ENCODE measurements at regions of chr10 and their contacts with region 1.

Region 1: DNA sequence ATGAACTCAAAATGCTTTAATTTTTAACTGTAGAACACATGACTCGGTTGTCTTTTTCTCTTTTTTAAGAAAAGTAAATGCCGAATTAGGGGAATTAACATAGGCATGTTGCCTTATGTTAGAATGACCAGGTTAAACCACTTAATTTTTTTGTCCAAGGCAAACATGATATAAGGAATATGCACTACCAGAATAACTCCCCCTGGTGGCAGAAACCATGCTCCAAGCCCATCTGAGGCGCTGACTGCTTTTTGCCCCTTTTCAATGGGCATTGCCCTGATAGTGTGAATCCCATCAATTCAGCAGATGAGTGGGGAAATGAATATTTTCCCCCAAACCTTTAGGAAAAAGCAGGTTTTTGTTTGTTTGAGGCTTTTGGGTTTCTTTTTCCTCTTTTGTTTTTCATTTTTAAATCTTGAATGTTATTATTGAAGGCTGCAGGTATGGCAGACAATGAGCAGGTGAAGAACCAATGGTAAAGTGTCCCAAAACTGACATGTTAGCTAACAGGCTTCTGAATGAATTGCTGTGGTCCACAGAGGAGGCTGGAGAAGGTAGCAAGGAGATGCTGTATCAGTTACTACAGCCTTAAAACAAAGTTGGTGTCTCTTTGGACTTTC is 284.3 kb downstream of the SORCS3 start:
- DNase-seq: peak; percentile 9
- H3K4me3 ChIP-seq: no peak overlapping the region
- H3K27ac ChIP-seq: no peak overlapping the region
- H3K4me1 ChIP-seq: no peaks in the 10 kb centered on the region
- H3K27me3 ChIP-seq: no peaks in the 10 kb centered on the region
- CTCF ChIP-seq: peak in 3 of 4 experiments; percentile 34 to 56 (median 38)
- POLR2A ChIP-seq: no peak

Region 2: DNA sequence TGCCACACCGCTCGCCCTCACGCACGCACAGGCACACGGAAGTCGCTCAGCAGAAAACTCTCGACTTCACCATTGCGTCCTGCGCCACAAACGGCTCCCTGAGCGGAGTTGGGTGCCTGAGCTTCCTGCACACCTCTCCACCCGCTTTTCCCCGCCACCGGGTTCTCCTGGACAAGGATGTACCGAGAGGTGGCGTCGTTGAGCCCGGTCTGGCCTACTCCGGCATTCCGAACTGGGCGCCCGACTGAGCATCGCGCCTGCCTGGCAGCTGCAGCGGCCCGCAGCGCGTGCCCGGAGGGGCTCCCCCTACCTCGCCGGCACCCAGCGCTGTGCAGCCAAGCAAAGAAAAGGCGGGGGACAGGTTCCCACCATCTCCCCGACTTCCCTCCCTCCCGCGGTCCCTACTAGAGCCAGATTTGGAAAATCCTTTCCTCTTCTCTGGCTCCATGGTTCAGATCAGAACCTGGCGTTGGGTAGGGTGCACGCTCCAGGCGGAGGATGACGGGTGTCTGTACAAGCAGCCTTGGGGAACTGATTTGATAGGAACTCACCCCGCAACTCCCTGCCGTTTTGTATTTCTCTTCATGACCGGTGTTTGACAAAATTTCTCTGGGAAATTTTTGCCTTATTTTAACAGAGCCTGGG is 282.6 kb before region 1 on chr10:
- intact Hi-C with region 1: loop called (anchors 10 kb)
- DNase-seq: no peak
- H3K4me3 ChIP-seq: no peak overlapping the region
- H3K27ac ChIP-seq: no peak overlapping the region
- H3K4me1 ChIP-seq: no peaks in the 10 kb centered on the region
- H3K27me3 ChIP-seq: peaks cover 37% of the 10 kb centered on the region
- CTCF ChIP-seq: no peak
- POLR2A ChIP-seq: no peak

Region 3: DNA sequence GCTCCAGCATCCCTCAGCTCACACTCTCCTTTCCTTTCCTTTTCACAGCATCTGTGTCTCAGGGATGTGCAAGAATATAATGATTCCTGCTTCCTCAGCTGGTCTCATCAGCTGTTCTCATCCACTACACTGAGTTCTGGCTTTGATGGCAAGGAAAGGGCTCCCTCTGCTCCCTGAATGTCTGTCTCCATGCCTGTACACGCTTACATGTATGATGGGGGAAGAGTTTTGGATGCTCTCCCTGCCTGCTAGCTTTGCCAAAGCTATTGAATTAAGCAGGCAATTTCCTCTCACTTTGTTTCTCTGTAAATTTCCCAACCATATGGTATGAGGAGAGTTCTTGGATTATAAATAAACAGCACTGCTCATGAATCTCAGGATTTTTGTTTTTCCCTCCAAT is 29.8 kb before region 1 on chr10:
- intact Hi-C with region 1: no loop called
- DNase-seq: no peak
- H3K4me3 ChIP-seq: no peak overlapping the region
- H3K27ac ChIP-seq: no peak overlapping the region
- H3K4me1 ChIP-seq: no peaks in the 10 kb centered on the region
- H3K27me3 ChIP-seq: no peaks in the 10 kb centered on the region
- CTCF ChIP-seq: no peak
- POLR2A ChIP-seq: no peak

Measured in prostate gland (tissue), 2 donors.